Activated CD4-positive, alpha-beta T cell treated with anti-CD3 and anti-CD28 coated beads for 36 hours (primary cell): ENCODE measurements at regions of chr16 and their contacts with region 1.

Region 1: GRCh38 chr16:27235055-27235937 is 32.0 kb downstream of the KDM8 start:
- DNase-seq: peak; percentile 90
- ATAC-seq: peak; percentile 44
- H3K4me3 Mint-ChIP-seq: peak overlapping the region; percentile 65
- H3K27ac Mint-ChIP-seq: peak overlapping the region; percentile 100
- H3K4me1 Mint-ChIP-seq: peaks cover 99% of the 10 kb centered on the region
- H3K27me3 Mint-ChIP-seq: no peaks in the 10 kb centered on the region

Region 2: GRCh38 chr16:27080870-27081269 is 154.4 kb before region 1 on chr16:
- CTCF ChIA-PET with region 1: no interaction called
- POLR2A ChIA-PET with region 1: no interaction called
- intact Hi-C with region 1: no loop called
- DNase-seq: no peak
- ATAC-seq: no peak
- H3K4me3 Mint-ChIP-seq: no peak overlapping the region
- H3K27ac Mint-ChIP-seq: no peak overlapping the region
- H3K4me1 Mint-ChIP-seq: no peaks in the 10 kb centered on the region
- H3K27me3 Mint-ChIP-seq: peaks cover 21% of the 10 kb centered on the region

Region 3: DNA sequence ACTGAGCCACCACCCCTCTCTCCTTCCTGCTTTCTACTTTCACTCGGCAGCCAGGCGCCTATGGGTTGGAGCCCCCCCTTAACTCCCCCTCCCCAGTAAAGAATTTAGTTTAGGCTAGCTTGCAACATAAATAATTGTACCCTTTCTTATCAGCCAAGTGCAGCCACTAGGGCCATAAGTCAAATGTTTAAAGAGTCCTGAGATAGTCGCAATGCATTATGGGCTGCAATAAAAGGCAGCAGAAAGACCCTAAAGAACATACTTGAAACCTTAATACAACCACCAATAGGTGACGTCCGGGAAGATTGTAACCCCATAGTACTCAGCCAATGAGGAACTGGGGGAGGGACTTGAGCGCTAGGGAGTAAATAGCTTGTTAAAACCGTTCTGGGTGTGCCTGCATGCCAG is 128.1 kb before region 1 on chr16:
- CTCF ChIA-PET with region 1: no interaction called
- POLR2A ChIA-PET with region 1: no interaction called
- intact Hi-C with region 1: no loop called
- DNase-seq: no peak
- ATAC-seq: no peak
- H3K4me3 Mint-ChIP-seq: no peak overlapping the region
- H3K27ac Mint-ChIP-seq: no peak overlapping the region
- H3K4me1 Mint-ChIP-seq: peaks cover 3% of the 10 kb centered on the region
- H3K27me3 Mint-ChIP-seq: no peaks in the 10 kb centered on the region

Region 4: GRCh38 chr16:27169511-27170071 is 65.7 kb before region 1 on chr16:
- CTCF ChIA-PET with region 1: interaction called, 10 read pairs
- POLR2A ChIA-PET with region 1: no interaction called
- intact Hi-C with region 1: no loop called
- DNase-seq: peak; percentile 86
- ATAC-seq: peak; percentile 92
- H3K4me3 Mint-ChIP-seq: peak overlapping the region; percentile 3
- H3K27ac Mint-ChIP-seq: peak overlapping the region; percentile 74
- H3K4me1 Mint-ChIP-seq: peaks cover 68% of the 10 kb centered on the region
- H3K27me3 Mint-ChIP-seq: no peaks in the 10 kb centered on the region

Region 5: DNA sequence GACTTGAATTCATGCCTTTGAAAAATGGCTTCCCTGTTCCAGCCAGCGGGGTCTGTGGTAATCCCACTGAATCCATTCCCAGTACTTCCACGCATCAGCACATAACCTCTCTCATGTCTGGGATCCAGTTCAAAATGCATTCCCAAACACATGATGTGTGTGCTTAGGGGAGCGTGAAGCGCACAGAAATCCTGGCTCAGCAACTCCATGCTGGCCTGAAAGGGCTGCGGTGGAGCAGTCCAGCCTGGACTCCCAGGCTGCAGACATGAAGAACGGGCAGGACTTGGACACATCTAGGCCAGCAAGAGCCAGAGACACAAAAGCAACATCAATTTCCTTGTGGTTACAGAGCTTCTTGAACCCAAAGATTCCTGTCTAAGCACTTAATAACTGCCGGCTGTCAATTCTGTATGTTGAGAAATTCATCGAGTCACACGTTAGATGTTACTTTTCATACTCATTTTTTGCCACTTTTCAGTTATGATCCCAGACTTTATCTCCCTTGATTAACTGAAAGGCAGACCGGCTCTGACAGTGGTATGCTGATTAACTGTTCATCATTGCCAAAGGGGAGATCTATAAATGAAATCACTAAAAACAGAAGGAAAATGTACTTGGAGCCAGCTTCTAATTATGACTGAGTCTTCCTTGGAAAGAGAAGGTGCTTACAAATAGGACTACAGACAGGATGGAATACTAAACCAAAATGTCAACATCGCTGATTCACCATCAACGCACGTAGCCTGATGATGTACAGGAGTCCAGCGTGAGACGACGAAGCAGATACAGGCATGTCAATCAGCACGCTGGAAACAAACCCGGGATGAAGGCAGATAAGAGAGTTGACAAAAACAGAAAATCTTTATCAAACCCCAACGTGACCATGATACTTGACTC is 10.2 kb after region 1 on chr16:
- CTCF ChIA-PET with region 1: interaction called, 63 read pairs
- POLR2A ChIA-PET with region 1: interaction called, 6 read pairs
- intact Hi-C with region 1: loop called (anchors 1 kb)
- DNase-seq: peak; percentile 78
- ATAC-seq: peak; percentile 89
- H3K4me3 Mint-ChIP-seq: peak overlapping the region; percentile 18
- H3K27ac Mint-ChIP-seq: peak overlapping the region; percentile 93
- H3K4me1 Mint-ChIP-seq: peaks cover 86% of the 10 kb centered on the region
- H3K27me3 Mint-ChIP-seq: no peaks in the 10 kb centered on the region

Region 6: GRCh38 chr16:27273670-27274423 is 38.6 kb after region 1 on chr16:
- CTCF ChIA-PET with region 1: interaction called, 21 read pairs
- POLR2A ChIA-PET with region 1: interaction called, 12 read pairs
- intact Hi-C with region 1: loop called (anchors 1 kb)
- DNase-seq: peak; percentile 69
- ATAC-seq: peak; percentile 89
- H3K4me3 Mint-ChIP-seq: peak overlapping the region; percentile 35
- H3K27ac Mint-ChIP-seq: peak overlapping the region; percentile 87
- H3K4me1 Mint-ChIP-seq: peaks cover 70% of the 10 kb centered on the region
- H3K27me3 Mint-ChIP-seq: no peaks in the 10 kb centered on the region

Region 7: DNA sequence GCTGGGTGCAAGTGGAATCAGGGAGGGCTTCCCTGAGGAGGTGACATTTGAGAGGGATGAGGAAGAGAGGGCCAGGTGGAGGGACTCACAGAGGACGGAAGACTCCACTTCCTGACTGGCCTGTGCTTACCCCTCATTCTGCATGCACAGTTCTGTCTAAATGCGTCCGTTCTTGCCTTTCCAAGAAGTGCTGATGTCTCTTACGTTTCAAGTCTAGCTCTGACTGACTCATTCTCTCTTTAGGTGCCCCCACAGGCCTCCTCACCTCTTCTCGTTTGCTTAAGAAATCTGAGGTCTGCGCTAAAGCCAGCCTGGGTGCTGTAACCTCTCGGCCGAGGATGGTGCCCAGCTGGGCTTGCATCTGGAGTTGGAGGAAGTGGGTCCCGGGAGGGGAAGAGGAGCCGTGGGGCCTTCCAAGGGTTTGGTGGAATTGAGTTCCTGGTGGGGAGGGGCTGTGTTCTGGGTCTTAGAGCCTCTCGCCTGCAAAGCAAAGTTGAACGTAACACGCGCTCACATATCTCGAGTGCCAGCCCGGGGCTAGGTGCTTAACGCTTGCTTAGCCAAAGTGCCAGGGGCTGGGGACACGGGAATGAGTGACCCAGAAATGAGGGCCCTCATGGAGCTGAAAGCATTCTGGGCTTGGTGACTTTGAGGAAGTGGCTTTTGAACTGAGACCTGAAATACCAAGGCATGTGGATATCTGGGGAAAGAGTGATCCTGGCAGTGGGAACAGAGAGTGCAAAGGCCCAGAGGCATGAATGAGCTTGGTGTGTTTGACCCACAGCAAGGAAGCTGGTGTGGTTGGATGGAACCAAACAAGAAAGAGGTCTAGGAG is 83.3 kb after region 1 on chr16:
- CTCF ChIA-PET with region 1: interaction called, 80 read pairs
- POLR2A ChIA-PET with region 1: interaction called, 111 read pairs
- intact Hi-C with region 1: loop called (anchors 1 kb)
- DNase-seq: peak; percentile 80
- ATAC-seq: peak; percentile 78
- H3K4me3 Mint-ChIP-seq: peak overlapping the region; percentile 90
- H3K27ac Mint-ChIP-seq: peak overlapping the region; percentile 97
- H3K4me1 Mint-ChIP-seq: peaks cover 79% of the 10 kb centered on the region
- H3K27me3 Mint-ChIP-seq: no peaks in the 10 kb centered on the region

Region 8: GRCh38 chr16:27374804-27375425 is 139.6 kb after region 1 on chr16:
- CTCF ChIA-PET with region 1: interaction called, 61 read pairs
- POLR2A ChIA-PET with region 1: interaction called, 10 read pairs
- intact Hi-C with region 1: no loop called
- DNase-seq: peak; percentile 81
- ATAC-seq: peak; percentile 48
- H3K4me3 Mint-ChIP-seq: no peak overlapping the region
- H3K27ac Mint-ChIP-seq: no peak overlapping the region
- H3K4me1 Mint-ChIP-seq: peaks cover 50% of the 10 kb centered on the region
- H3K27me3 Mint-ChIP-seq: no peaks in the 10 kb centered on the region

Region 9: GRCh38 chr16:27461483-27462171 is 226.3 kb after region 1 on chr16:
- CTCF ChIA-PET with region 1: interaction called, 4 read pairs
- POLR2A ChIA-PET with region 1: no interaction called
- intact Hi-C with region 1: loop called (anchors 1 kb)
- DNase-seq: no peak
- ATAC-seq: no peak
- H3K4me3 Mint-ChIP-seq: no peak overlapping the region
- H3K27ac Mint-ChIP-seq: no peak overlapping the region
- H3K4me1 Mint-ChIP-seq: peaks cover 21% of the 10 kb centered on the region
- H3K27me3 Mint-ChIP-seq: no peaks in the 10 kb centered on the region